ENCODE measurements at regions of chr4 and their contacts with region 1.

Region 1: GRCh38 chr4:55546756-55547465 is at the start of gene CLOCK:
- DNase-seq: peak; percentile 79 to 90
- H3K4me3 ChIP-seq: peak within 1 kb of the TSS; percentile 61 to 98
- H3K27ac ChIP-seq: peak within 1 kb of the TSS; percentile 88 to 100
- H3K4me1 ChIP-seq: peaks cover 0 to 19% (median 6%) of the 10 kb centered on the region in 4 donors
- H3K27me3 ChIP-seq: no peaks in the 10 kb centered on the region
- CTCF ChIP-seq: peak; percentile 58

Region 2: GRCh38 chr4:55395529-55396307 is 151.2 kb before region 1 on chr4 and contains the start of gene TMEM165:
- intact Hi-C with region 1: loop called (anchors 5 kb)
- DNase-seq: peak; percentile 88 to 95
- H3K4me3 ChIP-seq: peak within 1 kb of the TSS; percentile 74 to 98
- H3K27ac ChIP-seq: peak within 1 kb of the TSS; percentile 98 to 99
- H3K4me1 ChIP-seq: peaks cover 0 to 37% (median 18%) of the 10 kb centered on the region in 4 donors
- H3K27me3 ChIP-seq: no peaks in the 10 kb centered on the region
- CTCF ChIP-seq: no peak

Region 3: DNA sequence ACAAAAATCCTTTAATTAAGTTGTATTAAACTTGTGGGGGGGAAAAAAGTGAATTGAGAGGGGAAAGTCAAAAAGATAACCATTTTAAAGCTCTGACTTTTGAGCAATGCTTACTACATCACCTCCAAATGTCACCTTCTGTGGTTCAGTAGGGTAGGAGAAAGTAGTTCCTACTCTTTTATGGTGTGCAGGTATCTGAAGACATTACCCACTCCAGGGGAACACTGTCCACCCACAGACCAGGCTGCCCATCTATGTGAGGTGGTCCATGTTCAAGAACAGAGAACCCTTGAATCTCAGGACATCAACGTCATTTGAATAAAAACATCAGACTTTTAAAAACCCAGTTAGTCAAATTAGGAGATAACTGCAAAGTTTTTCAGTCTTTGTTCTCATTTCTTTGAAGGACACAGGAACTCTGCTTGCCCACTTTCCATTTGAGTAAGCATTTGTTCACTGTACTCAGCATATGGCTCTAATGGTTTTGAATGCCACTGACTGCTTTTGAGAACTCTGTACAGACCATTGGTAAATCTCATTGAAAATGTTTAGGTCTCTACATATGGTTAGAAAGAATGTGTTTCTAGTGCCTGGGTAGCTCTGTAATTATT is 70.8 kb after region 1 on chr4:
- intact Hi-C with region 1: no loop called
- DNase-seq: no peak
- H3K4me3 ChIP-seq: no peak overlapping the region
- H3K27ac ChIP-seq: no peak overlapping the region
- H3K4me1 ChIP-seq: no peaks in the 10 kb centered on the region
- H3K27me3 ChIP-seq: no peaks in the 10 kb centered on the region
- CTCF ChIP-seq: no peak